ENCODE measurements at regions of chr5 and their contacts with region 1.

Region 1: GRCh38 chr5:98928873-98929696 is at the start of gene CHD1:
- DNase-seq: peak; percentile 91 to 99 (median 94)
- ATAC-seq: peak; percentile 67
- H3K4me3 ChIP-seq: peak within 1 kb of the TSS; percentile 97 to 100
- H3K4me3 Mint-ChIP-seq: peak within 1 kb of the TSS; percentile 96
- H3K27ac ChIP-seq: peak within 1 kb of the TSS; percentile 100
- H3K27ac Mint-ChIP-seq: peak within 1 kb of the TSS; percentile 100
- H3K4me1 ChIP-seq: peaks cover 65% of the 10 kb centered on the region
- H3K4me1 Mint-ChIP-seq: peaks cover 69% of the 10 kb centered on the region
- H3K27me3 ChIP-seq: no peaks in the 10 kb centered on the region
- H3K27me3 Mint-ChIP-seq: no peaks in the 10 kb centered on the region
- CTCF ChIP-seq: no peak
- total RNA-seq, gene CHD1: 319 to 327 TPM

Region 2: GRCh38 chr5:98773464-98774191 is 155.5 kb before region 1 on chr5 and contains the start of gene RGMB:
- CTCF ChIA-PET with region 1: no interaction called
- POLR2A ChIA-PET with region 1: interaction called, 15 read pairs
- intact Hi-C with region 1: loop called (anchors 1 to 5 kb)
- DNase-seq: peak; percentile 71 to 92 (median 89)
- ATAC-seq: peak; percentile 86
- H3K4me3 ChIP-seq: peak within 1 kb of the TSS; percentile 69 to 70
- H3K4me3 Mint-ChIP-seq: peak within 1 kb of the TSS; percentile 95
- H3K27ac ChIP-seq: peak within 1 kb of the TSS; percentile 37 to 53
- H3K27ac Mint-ChIP-seq: peak within 1 kb of the TSS; percentile 87
- H3K4me1 ChIP-seq: peaks cover 41% of the 10 kb centered on the region
- H3K4me1 Mint-ChIP-seq: peaks cover 56% of the 10 kb centered on the region
- H3K27me3 ChIP-seq: peaks cover 0 to 12% of the 10 kb centered on the region in 2 experiments
- H3K27me3 Mint-ChIP-seq: peaks cover 24% of the 10 kb centered on the region
- CTCF ChIP-seq: no peak
- total RNA-seq, gene RGMB: 5.8 to 6.6 TPM

Region 3: GRCh38 chr5:98905857-98906690 is 23.0 kb before region 1 on chr5:
- CTCF ChIA-PET with region 1: interaction called, 6 read pairs
- POLR2A ChIA-PET with region 1: interaction called, 4 read pairs
- intact Hi-C with region 1: loop called (anchors 1 to 2 kb)
- DNase-seq: peak in 2 of 9 experiments; percentile 62 to 72
- ATAC-seq: peak; percentile 67
- H3K4me3 ChIP-seq: no peak overlapping the region
- H3K4me3 Mint-ChIP-seq: no peak overlapping the region
- H3K27ac ChIP-seq: peak overlapping the region in 1 of 2 experiments; percentile 34
- H3K27ac Mint-ChIP-seq: no peak overlapping the region
- H3K4me1 ChIP-seq: peaks cover 20% of the 10 kb centered on the region
- H3K4me1 Mint-ChIP-seq: peaks cover 51% of the 10 kb centered on the region
- H3K27me3 ChIP-seq: no peaks in the 10 kb centered on the region
- H3K27me3 Mint-ChIP-seq: no peaks in the 10 kb centered on the region
- CTCF ChIP-seq: peak; percentile 96

Region 4: GRCh38 chr5:98940581-98940980 is 11.5 kb after region 1 on chr5:
- CTCF ChIA-PET with region 1: interaction called, 5 read pairs
- POLR2A ChIA-PET with region 1: interaction called, 16 read pairs
- intact Hi-C with region 1: no loop called
- DNase-seq: no peak
- ATAC-seq: no peak
- H3K4me3 ChIP-seq: no peak overlapping the region
- H3K4me3 Mint-ChIP-seq: no peak overlapping the region
- H3K27ac ChIP-seq: no peak overlapping the region
- H3K27ac Mint-ChIP-seq: peak overlapping the region; percentile 47
- H3K4me1 ChIP-seq: no peaks in the 10 kb centered on the region
- H3K4me1 Mint-ChIP-seq: peaks cover 48% of the 10 kb centered on the region
- H3K27me3 ChIP-seq: no peaks in the 10 kb centered on the region
- H3K27me3 Mint-ChIP-seq: no peaks in the 10 kb centered on the region
- CTCF ChIP-seq: no peak

Region 5: DNA sequence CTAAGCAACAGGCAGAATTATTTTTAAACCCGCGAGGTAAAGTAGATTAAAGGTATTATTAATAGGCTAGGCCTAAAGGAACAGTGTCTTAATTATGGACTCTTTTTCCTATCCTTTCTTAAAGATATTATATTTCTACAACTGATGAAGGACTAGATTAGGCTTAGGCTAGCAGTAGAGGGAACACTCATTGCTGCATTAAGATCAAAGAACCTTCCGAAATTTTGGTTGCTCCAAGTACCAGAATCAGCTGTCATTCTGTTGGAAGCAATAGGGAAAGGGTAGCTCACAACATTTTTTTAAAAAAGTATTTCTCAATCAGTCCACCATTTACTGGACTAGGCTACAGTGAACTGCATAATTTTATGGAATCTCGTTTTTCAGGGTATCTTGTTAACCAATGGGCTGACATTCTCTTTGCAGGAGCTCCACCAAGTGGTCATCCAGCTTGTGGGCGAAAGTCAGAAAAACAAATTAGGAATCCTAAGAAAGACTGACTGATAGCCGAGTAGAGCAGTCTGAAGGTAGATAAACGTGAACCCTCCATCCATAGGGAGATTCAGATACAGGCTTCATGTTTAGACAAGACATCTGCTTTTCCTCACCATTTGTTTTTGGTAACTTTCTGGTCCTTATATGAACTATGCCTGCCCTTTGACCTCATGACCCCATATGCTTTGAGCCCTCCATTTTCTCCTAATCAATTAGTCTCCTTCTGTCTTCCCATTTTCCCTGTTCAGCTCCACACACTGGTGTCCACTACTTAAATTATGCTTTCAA is 103.3 kb after region 1 on chr5:
- CTCF ChIA-PET with region 1: interaction called, 6 read pairs
- POLR2A ChIA-PET with region 1: interaction called, 20 read pairs
- intact Hi-C with region 1: loop called in 1 of 2 experiments (anchors 2 kb)
- DNase-seq: peak in 4 of 9 experiments; percentile 22 to 58 (median 36)
- ATAC-seq: peak; percentile 28
- H3K4me3 ChIP-seq: peak overlapping the region; percentile 31 to 51
- H3K4me3 Mint-ChIP-seq: peak overlapping the region; percentile 86
- H3K27ac ChIP-seq: peak overlapping the region; percentile 30 to 95
- H3K27ac Mint-ChIP-seq: peak overlapping the region; percentile 97
- H3K4me1 ChIP-seq: peaks cover 43% of the 10 kb centered on the region
- H3K4me1 Mint-ChIP-seq: peaks cover 65% of the 10 kb centered on the region
- H3K27me3 ChIP-seq: no peaks in the 10 kb centered on the region
- H3K27me3 Mint-ChIP-seq: no peaks in the 10 kb centered on the region
- CTCF ChIP-seq: peak; percentile 25

Region 6: GRCh38 chr5:99037668-99038067 is 108.6 kb after region 1 on chr5:
- CTCF ChIA-PET with region 1: interaction called, 6 read pairs
- POLR2A ChIA-PET with region 1: interaction called, 20 read pairs
- intact Hi-C with region 1: loop called in 1 of 2 experiments (anchors 2 kb)
- DNase-seq: peak; percentile 41 to 85 (median 74)
- ATAC-seq: peak; percentile 71
- H3K4me3 ChIP-seq: peak overlapping the region in 1 of 2 experiments; percentile 4
- H3K4me3 Mint-ChIP-seq: peak overlapping the region; percentile 66
- H3K27ac ChIP-seq: peak overlapping the region; percentile 38 to 49
- H3K27ac Mint-ChIP-seq: peak overlapping the region; percentile 89
- H3K4me1 ChIP-seq: peaks cover 41% of the 10 kb centered on the region
- H3K4me1 Mint-ChIP-seq: peaks cover 53% of the 10 kb centered on the region
- H3K27me3 ChIP-seq: no peaks in the 10 kb centered on the region
- H3K27me3 Mint-ChIP-seq: no peaks in the 10 kb centered on the region
- CTCF ChIP-seq: no peak

Region 7: DNA sequence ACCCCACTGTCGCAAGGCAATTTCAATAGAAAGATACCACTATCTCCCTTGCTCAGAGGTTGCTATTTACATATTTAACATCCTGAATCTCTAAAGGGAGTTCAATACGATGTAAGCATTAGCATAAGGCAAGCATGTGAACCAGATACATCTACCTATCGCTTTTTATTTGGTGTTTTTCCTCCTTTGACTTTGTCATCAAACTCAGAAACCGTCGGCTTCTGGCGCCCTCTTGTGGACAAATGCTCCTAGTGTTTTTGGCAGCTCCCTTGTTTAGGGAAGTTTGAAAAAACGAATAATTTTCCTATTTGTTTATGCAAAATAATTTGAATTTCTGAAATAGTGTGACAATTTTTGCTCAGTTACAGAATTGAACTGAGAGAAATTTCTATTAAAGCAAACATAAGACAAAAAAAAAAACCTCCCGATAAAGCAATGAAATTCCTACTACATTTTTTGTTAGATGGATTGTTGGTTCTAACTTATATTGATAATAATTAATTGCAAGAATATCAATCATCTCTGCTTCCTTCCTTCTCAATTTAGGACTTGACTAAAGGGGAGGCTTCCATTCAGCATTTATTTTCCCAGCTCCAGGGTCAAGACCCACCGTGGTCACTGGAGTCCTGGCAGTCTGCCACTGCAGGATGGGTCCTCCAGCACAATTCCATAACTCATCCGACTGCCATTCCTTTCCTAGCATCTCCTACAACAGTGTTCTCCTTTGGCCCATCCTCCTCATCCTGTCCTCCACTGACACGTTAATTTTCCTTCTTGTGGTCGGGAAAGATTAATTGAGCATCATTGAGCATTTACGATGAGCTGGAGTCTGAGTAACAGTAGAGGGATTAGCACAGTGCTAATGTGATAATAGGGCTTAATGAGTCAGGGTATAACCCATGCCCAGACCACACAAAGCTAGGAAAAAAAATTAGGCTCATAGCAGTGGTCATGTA is 131.5 kb after region 1 on chr5:
- CTCF ChIA-PET with region 1: interaction called, 17 read pairs
- POLR2A ChIA-PET with region 1: interaction called, 16 read pairs
- intact Hi-C with region 1: loop called in 1 of 2 experiments (anchors 1 kb)
- DNase-seq: peak; percentile 79 to 93 (median 86)
- ATAC-seq: peak; percentile 76
- H3K4me3 ChIP-seq: no peak overlapping the region
- H3K4me3 Mint-ChIP-seq: peak overlapping the region; percentile 29
- H3K27ac ChIP-seq: no peak overlapping the region
- H3K27ac Mint-ChIP-seq: no peak overlapping the region
- H3K4me1 ChIP-seq: peaks cover 5% of the 10 kb centered on the region
- H3K4me1 Mint-ChIP-seq: peaks cover 5% of the 10 kb centered on the region
- H3K27me3 ChIP-seq: no peaks in the 10 kb centered on the region
- H3K27me3 Mint-ChIP-seq: peaks cover 8% of the 10 kb centered on the region
- CTCF ChIP-seq: peak; percentile 95